Dorsolateral prefrontal cortex (tissue), 120 donors: ENCODE measurements at regions of chr14 and their contacts with region 1.

Region 1: GRCh38 chr14:89033756-89034155 is 209.3 kb downstream of the TTC8 start:
- DNase-seq: no peak
- H3K4me3 ChIP-seq: no peak overlapping the region
- H3K27ac ChIP-seq: no peak overlapping the region
- H3K27me3 ChIP-seq: peaks cover 0 to 2% (median 0%) of the 10 kb centered on the region in 45 donors
- CTCF ChIP-seq: no peak

Region 2: GRCh38 chr14:89178802-89179535 is 145.2 kb after region 1 on chr14:
- intact Hi-C with region 1: loop called in 1 of 2 experiments (anchors 10 kb)
- DNase-seq: no peak
- H3K4me3 ChIP-seq: no peak overlapping the region
- H3K27ac ChIP-seq: peak overlapping the region in 1 of 59 donors; percentile 96
- H3K27me3 ChIP-seq: no peaks in the 10 kb centered on the region
- CTCF ChIP-seq: no peak

Region 3: GRCh38 chr14:89625244-89625713 is 591.5 kb after region 1 on chr14:
- intact Hi-C with region 1: loop called in 1 of 2 experiments (anchors 10 kb)
- DNase-seq: peak in 5 of 10 donors; percentile 14 to 55 (median 39)
- H3K4me3 ChIP-seq: peak overlapping the region in 50 of 59 donors; percentile 0 to 58 (median 34)
- H3K27ac ChIP-seq: peak overlapping the region in 7 of 59 donors; percentile 2 to 41 (median 39)
- H3K27me3 ChIP-seq: no peaks in the 10 kb centered on the region
- CTCF ChIP-seq: no peak

Region 4: DNA sequence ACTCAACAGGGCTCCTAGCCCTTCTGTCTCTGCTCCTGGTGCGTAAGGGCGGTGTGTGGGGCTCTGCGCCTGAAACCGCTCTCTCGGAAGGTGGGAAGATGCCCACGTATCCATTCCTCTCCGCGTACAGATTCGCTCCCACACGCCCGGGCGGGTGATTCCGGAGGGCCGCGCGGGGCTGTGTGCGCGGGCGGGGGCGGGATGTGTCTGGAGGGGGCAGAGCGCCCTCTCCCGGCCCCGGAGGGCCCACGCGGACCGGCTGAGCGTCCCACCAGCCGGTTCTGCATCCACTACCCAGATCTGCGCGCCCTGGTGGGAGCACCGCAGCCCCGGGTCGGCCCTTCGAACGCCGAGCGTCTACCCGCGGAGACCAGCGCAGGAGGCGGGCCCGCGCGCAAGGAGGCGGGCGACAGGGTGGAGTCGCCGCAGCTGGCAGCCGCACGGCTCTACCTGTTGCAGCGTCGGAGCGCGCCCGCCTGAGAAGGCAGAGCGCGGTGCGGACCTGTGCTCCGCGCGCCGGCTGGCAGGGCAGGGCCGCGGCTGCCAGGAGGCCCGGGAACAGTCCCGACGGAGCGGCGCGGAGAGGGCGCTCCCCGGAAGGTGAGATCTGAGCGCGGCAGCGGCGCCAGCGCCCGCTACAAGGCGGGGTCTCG is 1026.7 kb after region 1 on chr14:
- intact Hi-C with region 1: loop called in 1 of 2 experiments (anchors 10 kb)
- DNase-seq: peak; percentile 26 to 81 (median 62)
- H3K4me3 ChIP-seq: peak overlapping the region; percentile 39 to 75 (median 60)
- H3K27ac ChIP-seq: peak overlapping the region in 1 of 59 donors; percentile 37
- H3K27me3 ChIP-seq: peaks cover 0 to 58% (median 25%) of the 10 kb centered on the region in 45 donors
- CTCF ChIP-seq: peak in 55 of 56 donors; percentile 33 to 95 (median 78)